Activated naive CD4-positive, alpha-beta T cell treated with anti-CD3 and anti-CD28 coated beads for 36 hours (primary cell): ENCODE measurements at regions of chr2 and their contacts with region 1.

Region 1: GRCh38 chr2:239369631-239370161 is 31.1 kb downstream of the HDAC4 start:
- DNase-seq: peak; percentile 95
- H3K4me3 Mint-ChIP-seq: peak overlapping the region; percentile 76
- H3K27ac Mint-ChIP-seq: peak overlapping the region; percentile 89
- H3K4me1 Mint-ChIP-seq: peaks cover 9% of the 10 kb centered on the region
- H3K27me3 Mint-ChIP-seq: no peaks in the 10 kb centered on the region

Region 2: DNA sequence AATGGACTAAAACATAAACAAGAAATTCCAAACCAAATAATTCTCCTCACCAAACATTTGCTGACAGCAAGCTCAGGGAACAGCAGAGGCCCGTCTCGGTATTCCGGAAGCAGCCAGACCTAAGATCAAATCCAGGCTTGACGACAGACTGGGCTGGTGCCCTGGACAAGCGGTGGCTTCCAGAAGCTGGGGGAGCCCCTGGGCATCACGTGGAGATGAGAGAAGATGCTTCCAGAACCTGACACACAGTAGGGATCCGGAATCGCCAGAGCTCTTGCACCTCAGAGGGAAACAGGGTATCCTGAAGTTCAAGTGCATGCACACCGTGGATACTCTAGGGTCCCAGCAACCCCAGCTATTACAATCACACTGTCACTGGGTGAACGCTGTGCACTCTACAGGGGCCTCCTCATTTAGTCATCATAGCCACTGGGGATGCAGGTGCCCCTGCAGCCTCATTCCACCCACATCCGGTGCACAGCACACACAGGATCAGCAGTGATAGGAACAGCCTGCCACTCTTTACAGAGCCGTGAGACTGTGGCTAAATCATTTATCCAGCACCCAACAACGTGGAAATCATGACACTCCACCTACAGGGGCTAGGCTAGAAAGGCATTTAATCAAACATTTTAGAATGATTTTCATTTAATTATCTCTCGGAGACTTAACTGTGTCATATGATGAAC is 71.4 kb before region 1 on chr2:
- CTCF ChIA-PET with region 1: no interaction called
- intact Hi-C with region 1: loop called (anchors 1 kb)
- DNase-seq: peak; percentile 91
- H3K4me3 Mint-ChIP-seq: peak overlapping the region; percentile 67
- H3K27ac Mint-ChIP-seq: peak overlapping the region; percentile 74
- H3K4me1 Mint-ChIP-seq: peaks cover 74% of the 10 kb centered on the region
- H3K27me3 Mint-ChIP-seq: peaks cover 2% of the 10 kb centered on the region

Region 3: DNA sequence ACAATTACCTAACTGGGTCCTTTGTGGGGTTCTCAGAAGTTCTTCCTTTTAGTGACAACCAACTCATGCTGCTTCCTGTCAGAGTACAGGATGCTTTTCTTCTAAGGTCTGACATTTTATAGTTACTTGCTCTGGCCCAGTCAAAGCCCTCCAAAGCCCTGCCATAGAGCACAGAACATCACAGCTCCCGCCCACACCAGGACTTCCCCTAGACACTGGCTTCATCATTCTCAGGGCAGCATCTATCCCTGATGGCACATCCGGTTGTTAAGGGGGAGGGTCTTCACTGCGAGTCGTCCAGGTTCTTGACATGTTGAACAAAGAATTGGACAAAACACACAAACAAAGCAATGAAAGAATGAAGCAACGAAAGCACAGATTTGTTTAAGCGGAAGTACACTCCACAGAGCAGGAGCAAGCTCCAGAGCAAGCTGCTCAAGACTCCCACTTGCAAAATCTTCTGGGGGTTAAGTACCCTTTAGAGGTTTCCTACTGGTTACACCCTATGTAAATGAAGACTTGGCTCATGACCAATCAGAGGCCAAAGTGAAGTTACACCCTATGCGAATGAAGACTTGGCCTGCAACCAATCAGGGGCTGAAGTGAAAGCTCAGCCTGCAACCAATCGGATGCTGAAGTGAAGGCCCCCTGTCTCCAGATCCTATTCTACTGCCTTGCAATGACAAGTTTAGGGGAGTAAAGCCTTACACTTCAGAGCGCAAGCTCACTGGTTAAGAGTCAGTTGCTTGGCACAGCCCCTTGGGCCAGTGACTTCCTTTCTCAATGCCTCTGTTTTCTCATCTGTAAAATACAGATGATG is 47.9 kb before region 1 on chr2:
- CTCF ChIA-PET with region 1: no interaction called
- intact Hi-C with region 1: loop called (anchors 1 kb)
- DNase-seq: peak; percentile 94
- H3K4me3 Mint-ChIP-seq: peak overlapping the region; percentile 55
- H3K27ac Mint-ChIP-seq: peak overlapping the region; percentile 93
- H3K4me1 Mint-ChIP-seq: peaks cover 77% of the 10 kb centered on the region
- H3K27me3 Mint-ChIP-seq: no peaks in the 10 kb centered on the region

Region 4: DNA sequence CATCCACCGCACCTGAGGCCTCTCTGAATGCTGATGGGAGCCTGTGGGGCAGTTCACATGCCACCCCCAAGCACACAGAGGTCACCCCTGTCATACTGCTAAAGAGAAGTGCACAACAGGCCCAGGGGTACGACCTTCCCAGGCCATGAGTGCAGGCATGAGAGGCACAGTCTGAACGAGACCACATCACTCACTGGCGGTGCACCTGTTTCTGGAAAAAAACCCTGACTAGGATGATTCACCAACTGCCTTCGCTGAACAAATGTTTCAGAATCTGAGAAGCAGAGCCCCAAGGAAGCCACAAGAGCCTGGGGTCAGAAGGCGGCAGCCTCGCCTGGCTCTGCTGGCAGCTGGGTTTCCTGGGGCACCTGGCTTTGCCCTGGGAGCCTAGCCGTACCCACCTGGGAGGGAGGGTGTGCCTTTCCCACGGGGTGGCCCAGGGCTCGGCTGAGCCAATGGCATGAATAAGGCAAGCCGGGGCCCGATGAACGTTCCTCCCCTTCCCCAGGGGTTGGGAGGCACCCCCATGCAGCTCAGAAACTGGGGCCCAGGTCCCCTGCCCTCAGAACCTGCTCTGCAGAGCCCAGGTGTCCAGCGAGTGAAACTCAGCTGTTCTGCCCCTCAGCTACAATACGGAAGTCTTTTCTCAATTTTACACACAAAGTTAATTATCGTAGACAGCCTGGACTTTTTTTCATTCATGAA is 42.7 kb before region 1 on chr2:
- CTCF ChIA-PET with region 1: no interaction called
- intact Hi-C with region 1: loop called (anchors 1 kb)
- DNase-seq: peak; percentile 94
- H3K4me3 Mint-ChIP-seq: peak overlapping the region; percentile 24
- H3K27ac Mint-ChIP-seq: peak overlapping the region; percentile 81
- H3K4me1 Mint-ChIP-seq: peaks cover 79% of the 10 kb centered on the region
- H3K27me3 Mint-ChIP-seq: no peaks in the 10 kb centered on the region

Region 5: GRCh38 chr2:239339726-239340601 is 29.7 kb before region 1 on chr2:
- CTCF ChIA-PET with region 1: no interaction called
- intact Hi-C with region 1: no loop called
- DNase-seq: peak; percentile 56
- H3K4me3 Mint-ChIP-seq: no peak overlapping the region
- H3K27ac Mint-ChIP-seq: no peak overlapping the region
- H3K4me1 Mint-ChIP-seq: peaks cover 40% of the 10 kb centered on the region
- H3K27me3 Mint-ChIP-seq: no peaks in the 10 kb centered on the region

Region 6: DNA sequence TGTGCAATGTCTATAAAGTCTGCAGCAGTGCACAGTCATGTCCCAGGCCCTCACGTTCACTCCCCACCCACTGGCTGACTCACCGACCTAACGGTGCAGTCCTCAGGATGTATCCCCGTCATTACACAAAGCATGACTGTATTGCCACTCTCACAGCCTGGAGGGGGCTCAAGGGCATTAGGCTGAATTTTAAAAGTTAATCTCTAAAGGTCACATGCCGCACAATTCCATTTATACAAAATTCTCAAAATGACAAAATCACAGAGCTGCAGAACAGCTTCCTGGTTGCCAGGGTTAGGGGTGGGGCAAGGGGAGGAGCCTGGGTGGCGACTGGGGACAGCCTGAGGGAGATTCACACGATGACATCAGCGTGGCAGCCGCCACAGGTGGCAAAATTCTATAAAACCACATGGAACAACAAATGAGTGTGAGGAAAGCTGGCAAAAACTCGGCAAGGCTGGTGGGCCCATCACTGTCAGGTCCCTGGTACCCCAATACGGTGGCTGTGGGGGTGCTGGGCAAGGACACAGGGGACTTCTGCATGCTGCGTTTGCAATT is 557.8 kb after region 1 on chr2:
- CTCF ChIA-PET with region 1: no interaction called
- intact Hi-C with region 1: loop called (anchors 2 kb)
- DNase-seq: peak; percentile 83
- H3K4me3 Mint-ChIP-seq: no peak overlapping the region
- H3K27ac Mint-ChIP-seq: peak overlapping the region; percentile 66
- H3K4me1 Mint-ChIP-seq: peaks cover 17% of the 10 kb centered on the region
- H3K27me3 Mint-ChIP-seq: peaks cover 5% of the 10 kb centered on the region